ENCODE measurements at regions of chr1 and their contacts with region 1.

Region 1: DNA sequence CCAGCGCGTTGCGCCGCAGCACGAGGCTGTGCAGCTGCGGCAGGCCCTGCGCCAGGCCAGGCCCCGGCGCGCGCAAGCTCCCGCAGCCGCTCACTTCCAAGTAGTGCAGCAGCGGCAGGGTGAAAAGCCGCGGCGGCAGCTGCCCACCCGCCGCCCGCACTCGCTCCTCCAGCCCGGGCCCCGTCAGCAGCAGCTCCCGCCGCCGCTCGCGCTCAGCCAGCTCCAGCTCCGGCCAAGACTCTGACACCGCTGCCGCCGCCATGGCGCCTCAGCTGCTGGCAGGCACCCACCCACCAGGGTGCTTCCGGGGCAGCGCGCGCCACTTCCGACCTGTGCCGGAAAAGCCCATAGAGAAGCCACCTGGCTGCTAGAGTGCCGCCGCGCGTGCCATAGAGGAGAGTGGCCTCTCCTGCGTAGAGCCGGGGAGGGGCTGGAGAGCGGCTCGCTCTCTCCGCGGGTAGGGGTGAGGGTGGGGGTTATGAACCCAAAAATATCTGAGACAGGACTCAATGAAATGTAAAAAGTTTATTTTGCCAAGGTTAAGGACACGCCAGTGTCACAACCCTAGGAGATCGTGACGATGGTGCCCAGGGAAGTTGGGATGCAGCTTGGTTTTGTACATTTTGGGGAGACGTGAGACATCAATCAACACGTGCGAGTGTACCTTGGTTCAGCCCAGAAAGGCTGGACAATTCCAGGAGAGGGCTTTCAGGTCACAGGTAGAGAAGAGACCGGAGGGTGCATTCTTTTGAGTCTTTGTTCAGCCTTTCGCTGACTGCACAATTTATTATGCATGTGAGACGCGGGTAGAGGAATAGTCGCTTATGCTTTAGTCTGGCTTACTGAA is at the start of gene LRRC47:
- DNase-seq: peak; percentile 19
- H3K4me3 ChIP-seq: peak within 1 kb of the TSS; percentile 89
- H3K27me3 ChIP-seq: peaks cover 2% of the 10 kb centered on the region
- CTCF ChIP-seq: peak; percentile 11; the same call in 1 of the 2 replicates
- polyA plus RNA-seq, gene LRRC47: 17.7 and 22.8 TPM in 2 replicates

Region 2: DNA sequence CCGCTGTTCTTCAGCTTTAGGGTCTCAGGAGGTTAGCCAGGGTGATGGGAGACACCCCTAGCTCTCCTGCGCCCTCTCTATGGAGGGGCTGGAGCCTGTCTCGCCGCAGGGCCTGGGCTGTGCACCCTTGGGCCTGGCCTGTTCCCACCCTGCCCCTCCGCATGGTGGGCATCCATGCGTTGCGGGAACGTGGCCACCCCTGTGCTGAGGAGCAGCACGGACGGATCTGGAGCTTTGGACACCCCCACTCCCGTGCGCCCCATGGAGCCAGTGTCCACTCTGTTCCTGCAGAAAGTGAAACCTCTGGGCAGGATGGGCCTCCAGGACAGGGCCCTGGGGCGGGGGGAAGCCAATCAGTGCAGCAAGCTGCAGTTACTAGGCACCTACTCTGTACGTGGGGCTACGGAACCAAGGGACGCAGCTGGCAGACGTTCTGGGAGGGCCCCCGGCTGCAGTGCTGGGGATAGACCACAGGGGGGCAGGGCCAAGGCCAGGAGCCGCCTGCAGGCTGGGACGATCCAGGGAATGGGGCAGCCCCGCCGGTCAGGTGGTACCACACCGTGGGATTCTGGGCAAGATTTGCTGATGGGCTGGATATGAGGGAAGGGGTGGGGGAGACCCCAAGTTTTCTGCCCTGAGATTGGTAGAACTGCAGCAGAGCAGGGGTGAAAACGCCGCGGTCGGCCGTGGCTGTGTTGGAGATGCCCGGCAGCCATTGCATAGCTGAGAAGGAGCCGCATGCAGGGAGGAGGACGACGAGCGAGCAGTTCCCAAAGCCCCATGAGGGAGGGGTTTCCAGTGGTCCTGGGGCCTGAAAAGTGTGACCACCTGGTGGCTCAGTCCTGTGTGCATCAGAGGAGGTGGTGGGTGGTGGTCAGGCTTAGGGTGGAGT is 100.9 kb before region 1 on chr1:
- CTCF ChIA-PET with region 1: interaction called, 11 read pairs
- POLR2A ChIA-PET with region 1: no interaction called
- DNase-seq: no peak
- H3K4me3 ChIP-seq: no peak overlapping the region
- H3K27me3 ChIP-seq: peaks cover 19% of the 10 kb centered on the region
- CTCF ChIP-seq: peak; percentile 91

Region 3: GRCh38 chr1:3890389-3891328 is 94.2 kb after region 1 on chr1:
- CTCF ChIA-PET with region 1: no interaction called
- POLR2A ChIA-PET with region 1: no interaction called
- DNase-seq: no peak
- H3K4me3 ChIP-seq: no peak overlapping the region
- H3K27me3 ChIP-seq: no peaks in the 10 kb centered on the region
- CTCF ChIP-seq: no peak

Region 4: DNA sequence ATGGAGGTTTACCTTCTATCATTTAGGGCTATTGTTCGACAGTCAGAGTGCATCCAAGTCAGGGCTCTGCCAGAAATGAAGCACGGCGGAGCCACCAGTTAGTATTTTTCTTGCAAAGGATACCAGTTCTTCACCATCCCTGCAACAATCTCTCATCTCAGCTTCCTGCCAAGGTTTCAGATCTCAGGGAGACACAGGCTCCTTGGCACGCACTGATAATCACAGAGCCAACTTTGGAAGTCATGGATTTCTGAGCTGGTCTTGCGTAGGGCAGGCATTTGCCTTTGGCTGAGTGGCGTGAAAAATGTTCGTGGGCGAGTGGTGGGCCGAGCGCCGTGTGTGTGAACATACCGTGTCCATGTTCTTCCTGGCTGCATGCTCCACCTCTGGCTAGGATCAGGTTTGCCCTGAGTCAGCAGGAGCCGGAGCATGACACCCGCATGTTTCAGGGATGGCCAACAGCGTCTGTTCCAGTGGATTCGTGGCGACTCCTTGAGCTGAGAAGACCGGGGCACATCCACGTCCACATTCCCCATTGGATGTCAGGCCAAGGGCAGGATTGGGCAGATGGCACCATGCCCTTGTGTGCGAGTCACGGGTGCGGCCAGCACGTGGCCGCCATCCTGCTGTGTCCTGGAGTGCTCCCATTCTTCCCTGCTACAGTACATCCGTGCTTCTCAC is 222.2 kb after region 1 on chr1:
- CTCF ChIA-PET with region 1: no interaction called
- POLR2A ChIA-PET with region 1: no interaction called
- DNase-seq: no peak
- H3K4me3 ChIP-seq: no peak overlapping the region
- H3K27me3 ChIP-seq: no peaks in the 10 kb centered on the region
- CTCF ChIP-seq: no peak